ENCODE measurements at regions of chr7 and their contacts with region 1.

Region 1: DNA sequence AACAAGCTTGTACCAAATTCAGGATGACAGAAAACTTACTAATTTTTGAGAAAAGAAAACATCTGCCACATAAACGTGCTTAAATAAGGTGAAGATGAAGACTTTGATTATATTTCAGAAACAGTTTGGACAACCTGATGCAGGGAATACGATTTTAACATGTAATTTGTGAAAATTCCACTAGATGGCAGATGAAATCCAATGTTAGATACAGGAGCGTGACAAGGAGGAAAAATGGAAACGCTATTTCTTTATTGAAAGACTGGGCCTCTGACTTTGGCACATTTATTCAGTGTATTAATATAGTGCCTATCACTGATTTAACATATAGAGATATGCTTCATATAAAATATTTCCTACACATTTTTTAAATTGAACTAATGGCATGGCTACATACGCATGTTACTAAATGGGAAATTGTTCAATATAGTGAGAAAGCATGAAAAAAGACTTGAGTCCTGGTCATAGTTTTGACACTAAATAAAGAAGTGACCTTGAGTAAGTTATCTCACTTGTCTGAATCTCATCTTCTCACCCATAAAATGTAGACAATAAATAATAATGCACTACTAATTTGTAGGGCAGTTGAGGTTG is 60.7 kb downstream of the CD36 start:
- DNase-seq: no peak
- ATAC-seq: no peak
- H3K4me3 Mint-ChIP-seq: no peak overlapping the region
- H3K27ac Mint-ChIP-seq: no peak overlapping the region
- H3K4me1 Mint-ChIP-seq: peaks cover 4% of the 10 kb centered on the region
- H3K27me3 Mint-ChIP-seq: no peaks in the 10 kb centered on the region
- CTCF ChIP-seq: no peak

Region 2: GRCh38 chr7:80288175-80289122 is 410.7 kb before region 1 on chr7:
- CTCF ChIA-PET with region 1: no interaction called
- POLR2A ChIA-PET with region 1: no interaction called
- intact Hi-C with region 1: no loop called
- DNase-seq: no peak
- ATAC-seq: no peak
- H3K4me3 Mint-ChIP-seq: no peak overlapping the region
- H3K27ac Mint-ChIP-seq: no peak overlapping the region
- H3K4me1 Mint-ChIP-seq: no peaks in the 10 kb centered on the region
- H3K27me3 Mint-ChIP-seq: no peaks in the 10 kb centered on the region
- CTCF ChIP-seq: no peak

Region 3: DNA sequence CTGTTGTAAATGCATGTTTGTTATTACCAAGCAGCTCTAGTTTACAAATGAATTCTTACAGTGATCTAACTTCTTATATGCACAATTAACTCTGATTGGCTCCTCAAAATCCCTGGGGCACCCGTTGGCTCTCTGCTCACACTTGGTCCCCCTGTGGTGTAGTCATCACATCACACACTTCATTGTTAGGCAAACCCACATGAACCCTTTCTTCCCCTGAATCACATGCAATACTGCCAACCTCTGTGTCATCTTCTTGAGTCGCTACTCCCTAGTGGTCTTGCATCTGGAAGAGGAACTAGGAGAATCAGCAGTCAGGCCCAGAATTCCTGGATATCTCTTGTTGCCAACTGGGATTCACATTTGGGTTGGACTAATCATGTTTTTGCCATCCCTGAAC is 12.4 kb after region 1 on chr7:
- CTCF ChIA-PET with region 1: no interaction called
- POLR2A ChIA-PET with region 1: no interaction called
- intact Hi-C with region 1: no loop called
- DNase-seq: no peak
- ATAC-seq: no peak
- H3K4me3 Mint-ChIP-seq: no peak overlapping the region
- H3K27ac Mint-ChIP-seq: no peak overlapping the region
- H3K4me1 Mint-ChIP-seq: no peaks in the 10 kb centered on the region
- H3K27me3 Mint-ChIP-seq: no peaks in the 10 kb centered on the region
- CTCF ChIP-seq: no peak

Region 4: DNA sequence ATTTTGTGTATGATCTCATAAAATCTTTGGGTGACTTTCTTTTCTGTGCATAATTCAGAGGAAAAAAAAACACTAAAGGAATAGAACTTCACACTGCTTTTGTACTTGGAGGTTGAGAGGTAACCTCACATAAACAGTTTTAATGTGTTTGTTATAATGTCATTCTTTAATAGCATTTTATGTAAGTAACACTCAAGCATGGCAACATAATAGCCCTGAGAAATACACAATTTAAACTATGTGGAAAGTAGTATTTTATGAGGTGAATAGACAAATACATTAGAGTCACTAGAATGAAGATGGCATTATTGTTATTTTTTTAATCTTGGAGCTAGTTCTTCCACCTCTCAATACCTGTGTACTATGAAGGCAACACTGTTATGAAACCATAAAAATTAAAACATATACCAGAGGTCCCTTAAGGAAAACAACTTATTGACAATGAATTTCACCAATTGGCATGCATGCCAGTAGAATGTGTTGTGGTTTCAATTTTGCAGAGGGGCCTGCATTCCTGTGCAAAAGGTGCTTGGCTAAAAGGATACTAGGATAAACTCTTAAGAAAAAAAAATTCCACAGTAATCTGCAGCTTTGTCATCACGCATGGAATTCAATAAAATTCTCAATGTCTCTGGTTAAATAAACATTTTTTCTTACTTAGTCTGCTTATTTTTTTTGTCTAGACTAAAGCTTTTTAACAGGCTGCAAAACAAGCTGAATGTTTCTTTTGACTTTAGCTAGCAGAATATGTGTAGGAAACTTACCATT is 41.8 kb after region 1 on chr7:
- CTCF ChIA-PET with region 1: no interaction called
- POLR2A ChIA-PET with region 1: no interaction called
- intact Hi-C with region 1: loop called (anchors 5 kb)
- DNase-seq: no peak
- ATAC-seq: no peak
- H3K4me3 Mint-ChIP-seq: no peak overlapping the region
- H3K27ac Mint-ChIP-seq: no peak overlapping the region
- H3K4me1 Mint-ChIP-seq: no peaks in the 10 kb centered on the region
- H3K27me3 Mint-ChIP-seq: no peaks in the 10 kb centered on the region
- CTCF ChIP-seq: no peak

Region 5: DNA sequence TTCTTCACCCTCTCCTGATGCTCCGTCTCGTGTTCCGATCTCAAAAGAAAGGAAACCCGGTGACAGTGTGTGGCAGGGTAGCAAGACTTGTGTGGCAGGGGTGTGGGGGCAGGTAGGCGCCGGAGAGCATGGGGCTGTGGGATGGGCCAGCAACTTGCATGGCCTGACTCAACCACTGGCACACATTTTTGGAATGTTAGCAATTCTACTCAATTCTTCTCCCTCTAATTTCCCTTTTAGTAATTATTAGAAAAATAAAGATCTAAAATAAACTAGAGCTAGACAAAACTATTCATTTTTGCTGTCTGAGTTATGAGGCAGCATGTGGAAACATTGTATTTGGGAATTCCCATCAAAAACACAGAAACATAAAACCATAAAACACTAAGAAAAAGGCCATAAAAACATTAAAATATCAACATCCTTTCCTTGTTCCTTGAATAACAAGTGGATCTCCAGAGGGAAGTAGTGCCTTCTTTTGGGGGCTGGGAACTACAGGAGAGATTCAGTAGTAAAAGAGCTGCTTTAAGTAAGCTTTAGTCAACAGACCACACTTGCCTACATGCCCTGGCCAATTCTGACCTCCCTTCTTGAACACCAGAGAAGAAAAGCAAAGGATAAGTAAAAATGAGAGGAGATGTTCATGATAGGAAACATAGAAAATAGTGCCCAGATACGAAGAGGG is 197.9 kb after region 1 on chr7:
- CTCF ChIA-PET with region 1: no interaction called
- POLR2A ChIA-PET with region 1: no interaction called
- intact Hi-C with region 1: no loop called
- DNase-seq: no peak
- ATAC-seq: no peak
- H3K4me3 Mint-ChIP-seq: no peak overlapping the region
- H3K27ac Mint-ChIP-seq: no peak overlapping the region
- H3K4me1 Mint-ChIP-seq: no peaks in the 10 kb centered on the region
- H3K27me3 Mint-ChIP-seq: no peaks in the 10 kb centered on the region
- CTCF ChIP-seq: no peak

Region 6: GRCh38 chr7:81457852-81458522 is 758.8 kb after region 1 on chr7:
- CTCF ChIA-PET with region 1: interaction called, 3 read pairs
- POLR2A ChIA-PET with region 1: no interaction called
- intact Hi-C with region 1: loop called (anchors 5 kb)
- DNase-seq: no peak
- ATAC-seq: no peak
- H3K4me3 Mint-ChIP-seq: no peak overlapping the region
- H3K27ac Mint-ChIP-seq: no peak overlapping the region
- H3K4me1 Mint-ChIP-seq: peaks cover 3% of the 10 kb centered on the region
- H3K27me3 Mint-ChIP-seq: no peaks in the 10 kb centered on the region
- CTCF ChIP-seq: no peak

Region 7: DNA sequence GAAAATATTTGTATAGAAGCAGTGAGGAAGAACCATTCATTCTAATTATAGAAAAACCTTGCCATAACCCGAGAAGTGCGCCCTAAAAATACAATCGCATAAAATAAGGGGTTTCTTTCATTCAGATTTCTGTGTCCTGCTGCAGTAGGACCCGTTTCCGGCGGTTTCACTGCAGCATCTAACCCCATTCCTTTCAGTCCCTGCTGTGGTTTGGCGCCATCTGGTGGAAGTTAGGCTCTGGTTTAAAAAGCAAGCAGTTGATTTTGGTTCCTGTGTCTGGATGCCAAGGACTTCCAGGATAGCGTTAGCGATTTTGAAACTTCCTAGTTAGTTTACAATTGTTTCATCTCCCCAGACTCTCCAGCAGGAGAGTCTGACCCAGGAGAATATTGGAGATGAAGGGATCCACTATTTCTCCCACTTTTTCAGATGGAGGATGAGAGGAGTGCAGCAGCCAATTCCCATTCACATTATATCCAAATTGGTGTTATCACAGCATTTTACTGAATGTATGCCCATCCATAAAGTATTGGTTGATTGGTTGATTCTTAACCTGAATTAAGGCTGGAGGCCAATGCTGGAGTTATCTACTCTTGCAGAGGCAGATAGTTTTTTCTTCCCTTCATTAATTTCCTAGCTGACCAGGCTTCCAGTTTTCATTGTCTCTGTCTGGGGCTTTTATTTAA is 1873.2 kb after region 1 on chr7:
- CTCF ChIA-PET with region 1: no interaction called
- POLR2A ChIA-PET with region 1: no interaction called
- intact Hi-C with region 1: loop called (anchors 5 kb)
- DNase-seq: peak; percentile 17
- ATAC-seq: peak; percentile 37
- H3K4me3 Mint-ChIP-seq: no peak overlapping the region
- H3K27ac Mint-ChIP-seq: no peak overlapping the region
- H3K4me1 Mint-ChIP-seq: no peaks in the 10 kb centered on the region
- H3K27me3 Mint-ChIP-seq: no peaks in the 10 kb centered on the region
- CTCF ChIP-seq: peak; percentile 22

Measured in activated B cell treated with CpG ODN at 0.5 μM for 24 hours (primary cell).